ENCODE measurements at regions of chr9 and their contacts with region 1.

Region 1: DNA sequence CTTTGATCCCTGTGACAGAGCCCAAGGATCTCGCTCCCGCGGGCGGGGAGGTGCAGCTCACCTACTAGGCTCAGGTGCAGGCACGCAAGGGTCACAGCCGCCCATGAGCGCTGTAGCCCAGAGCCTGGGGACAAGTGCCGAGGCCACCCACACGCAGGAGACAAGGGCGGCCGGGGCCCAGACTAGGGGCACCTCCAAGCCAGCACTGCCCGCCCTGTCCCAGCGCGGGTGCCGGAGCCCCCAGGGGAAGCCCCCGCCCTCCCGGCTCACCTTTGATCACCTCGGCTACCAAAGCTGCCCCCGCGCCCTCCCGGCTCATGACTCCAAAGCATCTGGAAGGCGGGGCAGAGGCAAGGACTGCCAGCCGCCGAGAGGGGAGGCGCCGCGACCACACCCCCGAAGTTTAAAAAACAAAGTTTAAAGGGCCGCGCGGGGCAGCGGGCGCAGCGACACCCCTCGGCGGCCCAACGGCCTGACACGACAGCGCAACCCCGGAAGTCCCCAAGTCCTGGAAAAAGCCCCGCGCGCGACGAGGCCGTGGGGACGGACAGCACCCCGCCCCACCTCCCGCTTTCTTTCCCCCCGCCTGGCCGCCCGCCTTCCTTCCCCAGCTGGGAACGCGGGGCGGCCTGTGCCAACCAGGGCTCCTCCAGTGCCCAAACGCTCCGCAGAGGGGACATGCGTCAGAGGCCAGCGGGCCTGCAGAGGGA is 53.0 kb downstream of the CDC14B start:
- DNase-seq: peak; percentile 98
- H3K4me3 ChIP-seq: peak overlapping the region; percentile 83
- H3K4me3 Mint-ChIP-seq: peak overlapping the region; percentile 74
- H3K27ac Mint-ChIP-seq: peak overlapping the region; percentile 85
- H3K4me1 ChIP-seq: peaks cover 47% of the 10 kb centered on the region
- H3K4me1 Mint-ChIP-seq: peaks cover 30% of the 10 kb centered on the region
- H3K27me3 ChIP-seq: no peaks in the 10 kb centered on the region
- H3K27me3 Mint-ChIP-seq: no peaks in the 10 kb centered on the region
- CTCF ChIP-seq: peak; percentile 67 to 87

Region 2: DNA sequence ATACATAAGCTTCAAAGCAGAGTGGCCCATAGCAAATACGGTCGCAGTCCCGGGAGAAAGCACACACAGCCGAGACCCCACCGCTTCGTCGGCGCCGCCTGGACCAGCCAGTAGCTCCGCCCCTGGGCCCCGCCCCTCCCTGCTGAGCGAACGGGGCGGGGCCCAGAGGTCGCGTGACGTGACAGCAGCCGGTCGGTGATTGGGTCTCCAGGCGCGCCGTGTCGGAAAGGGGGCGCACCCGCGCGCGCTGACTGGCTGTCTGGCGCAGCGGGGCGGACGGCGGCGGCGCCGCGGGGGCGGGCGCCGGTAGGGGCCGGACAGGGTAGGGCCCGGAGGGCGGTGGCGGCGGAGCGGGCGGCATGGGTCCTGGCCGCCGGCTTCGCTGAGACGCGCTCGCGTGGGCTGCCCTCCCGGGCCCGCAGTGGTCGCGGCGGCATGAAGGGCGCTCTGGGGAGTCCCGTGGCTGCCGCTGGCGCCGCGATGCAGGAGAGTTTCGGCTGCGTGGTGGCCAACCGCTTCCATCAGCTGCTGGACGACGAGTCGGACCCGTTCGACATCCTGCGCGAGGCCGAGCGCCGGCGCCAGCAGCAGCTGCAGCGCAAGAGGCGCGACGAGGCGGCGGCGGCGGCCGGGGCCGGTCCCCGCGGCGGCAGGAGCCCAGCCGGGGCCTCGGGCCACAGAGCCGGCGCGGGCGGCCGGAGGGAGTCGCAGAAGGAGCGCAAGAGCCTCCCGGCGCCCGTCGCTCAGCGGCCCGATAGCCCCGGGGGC is 116.6 kb before region 1 on chr9 and contains the start of gene HABP4:
- CTCF ChIA-PET with region 1: interaction called, 4 read pairs
- POLR2A ChIA-PET with region 1: no interaction called
- intact Hi-C with region 1: loop called (anchors 1 kb)
- DNase-seq: peak; percentile 95 to 97
- H3K4me3 ChIP-seq: peak within 1 kb of the TSS; percentile 89
- H3K4me3 Mint-ChIP-seq: peak within 1 kb of the TSS; percentile 93
- H3K27ac Mint-ChIP-seq: peak within 1 kb of the TSS; percentile 76
- H3K4me1 ChIP-seq: 0 out of 2 replicates have a peak, but pooled peaks cover 3% of the 10 kb centered on the region
- H3K4me1 Mint-ChIP-seq: peaks cover 12% of the 10 kb centered on the region
- H3K27me3 ChIP-seq: no peaks in the 10 kb centered on the region
- H3K27me3 Mint-ChIP-seq: no peaks in the 10 kb centered on the region
- CTCF ChIP-seq: no peak
- total RNA-seq, gene HABP4: 24.8 and 26.7 TPM in 2 replicates

Region 3: GRCh38 chr9:96555567-96556386 is 10.9 kb before region 1 on chr9:
- CTCF ChIA-PET with region 1: no interaction called
- POLR2A ChIA-PET with region 1: no interaction called
- intact Hi-C with region 1: loop called (anchors 1 kb)
- DNase-seq: no peak
- H3K4me3 ChIP-seq: no peak overlapping the region
- H3K4me3 Mint-ChIP-seq: no peak overlapping the region
- H3K27ac Mint-ChIP-seq: no peak overlapping the region
- H3K4me1 ChIP-seq: peaks cover 51% of the 10 kb centered on the region
- H3K4me1 Mint-ChIP-seq: peaks cover 56% of the 10 kb centered on the region
- H3K27me3 ChIP-seq: no peaks in the 10 kb centered on the region
- H3K27me3 Mint-ChIP-seq: no peaks in the 10 kb centered on the region
- CTCF ChIP-seq: no peak

Region 4: GRCh38 chr9:96587338-96588315 is 21.0 kb after region 1 on chr9:
- CTCF ChIA-PET with region 1: no interaction called
- POLR2A ChIA-PET with region 1: no interaction called
- intact Hi-C with region 1: no loop called
- DNase-seq: no peak
- H3K4me3 ChIP-seq: no peak overlapping the region
- H3K4me3 Mint-ChIP-seq: no peak overlapping the region
- H3K27ac Mint-ChIP-seq: no peak overlapping the region
- H3K4me1 ChIP-seq: peaks cover 3% of the 10 kb centered on the region; the same call in 1 of the 2 replicates
- H3K4me1 Mint-ChIP-seq: no peaks in the 10 kb centered on the region
- H3K27me3 ChIP-seq: no peaks in the 10 kb centered on the region
- H3K27me3 Mint-ChIP-seq: no peaks in the 10 kb centered on the region
- CTCF ChIP-seq: no peak

Region 5: GRCh38 chr9:96619491-96620154 is 53.0 kb after region 1 on chr9 and contains the start of gene CDC14B:
- CTCF ChIA-PET with region 1: interaction called, 3 read pairs
- POLR2A ChIA-PET with region 1: interaction called, 10 read pairs
- intact Hi-C with region 1: loop called (anchors 1 kb)
- DNase-seq: peak; percentile 94 to 98
- H3K4me3 ChIP-seq: peak within 1 kb of the TSS; percentile 91
- H3K4me3 Mint-ChIP-seq: peak within 1 kb of the TSS; percentile 91
- H3K27ac Mint-ChIP-seq: peak within 1 kb of the TSS; percentile 82
- H3K4me1 ChIP-seq: peaks cover 18% of the 10 kb centered on the region
- H3K4me1 Mint-ChIP-seq: peaks cover 29% of the 10 kb centered on the region
- H3K27me3 ChIP-seq: no peaks in the 10 kb centered on the region
- H3K27me3 Mint-ChIP-seq: no peaks in the 10 kb centered on the region
- CTCF ChIP-seq: peak in 1 of 2 experiments; percentile 5
- total RNA-seq, gene CDC14B: 81.4 and 82.3 TPM in 2 replicates

Region 6: GRCh38 chr9:96644137-96644536 is 77.5 kb after region 1 on chr9:
- CTCF ChIA-PET with region 1: no interaction called
- POLR2A ChIA-PET with region 1: no interaction called
- intact Hi-C with region 1: loop called (anchors 2 kb)
- DNase-seq: peak; percentile 69 to 77
- H3K4me3 ChIP-seq: no peak overlapping the region
- H3K4me3 Mint-ChIP-seq: no peak overlapping the region
- H3K27ac Mint-ChIP-seq: no peak overlapping the region
- H3K4me1 ChIP-seq: peaks cover 18% of the 10 kb centered on the region; the same call in 1 of the 2 replicates
- H3K4me1 Mint-ChIP-seq: peaks cover 13% of the 10 kb centered on the region
- H3K27me3 ChIP-seq: no peaks in the 10 kb centered on the region
- H3K27me3 Mint-ChIP-seq: no peaks in the 10 kb centered on the region
- CTCF ChIP-seq: no peak

Region 7: DNA sequence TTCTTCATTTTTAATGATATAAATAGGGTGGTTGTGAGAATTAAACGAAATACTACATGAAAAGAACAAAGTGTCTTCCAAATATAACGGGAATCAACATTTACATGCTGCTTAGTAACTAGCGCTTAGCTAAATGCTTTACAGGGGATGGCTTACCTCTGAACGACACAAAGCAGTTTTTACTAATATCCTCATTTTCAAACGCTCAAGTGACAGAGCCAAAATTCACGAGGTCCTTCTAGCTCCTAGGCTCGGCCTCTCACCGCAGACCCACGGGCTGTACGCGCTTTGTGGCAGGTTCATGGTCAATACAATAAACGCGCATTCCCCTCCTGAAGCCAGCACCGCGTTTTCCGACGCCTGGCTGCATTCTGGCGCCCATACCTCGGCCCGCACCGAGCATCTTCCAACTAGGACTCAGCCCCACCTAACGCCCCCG is 210.8 kb after region 1 on chr9:
- CTCF ChIA-PET with region 1: no interaction called
- POLR2A ChIA-PET with region 1: no interaction called
- intact Hi-C with region 1: no loop called
- DNase-seq: no peak
- H3K4me3 ChIP-seq: peak overlapping the region; percentile 85
- H3K4me3 Mint-ChIP-seq: peak overlapping the region; percentile 95
- H3K27ac Mint-ChIP-seq: peak overlapping the region; percentile 90
- H3K4me1 ChIP-seq: peaks cover 4% of the 10 kb centered on the region; the same call in 1 of the 2 replicates
- H3K4me1 Mint-ChIP-seq: peaks cover 6% of the 10 kb centered on the region
- H3K27me3 ChIP-seq: no peaks in the 10 kb centered on the region
- H3K27me3 Mint-ChIP-seq: no peaks in the 10 kb centered on the region
- CTCF ChIP-seq: no peak

Measured in Caco-2 (cell line).